Right ventricle myocardium inferior (tissue), 1 donor: ENCODE measurements at regions of chr2 and their contacts with region 1.

Region 1: DNA sequence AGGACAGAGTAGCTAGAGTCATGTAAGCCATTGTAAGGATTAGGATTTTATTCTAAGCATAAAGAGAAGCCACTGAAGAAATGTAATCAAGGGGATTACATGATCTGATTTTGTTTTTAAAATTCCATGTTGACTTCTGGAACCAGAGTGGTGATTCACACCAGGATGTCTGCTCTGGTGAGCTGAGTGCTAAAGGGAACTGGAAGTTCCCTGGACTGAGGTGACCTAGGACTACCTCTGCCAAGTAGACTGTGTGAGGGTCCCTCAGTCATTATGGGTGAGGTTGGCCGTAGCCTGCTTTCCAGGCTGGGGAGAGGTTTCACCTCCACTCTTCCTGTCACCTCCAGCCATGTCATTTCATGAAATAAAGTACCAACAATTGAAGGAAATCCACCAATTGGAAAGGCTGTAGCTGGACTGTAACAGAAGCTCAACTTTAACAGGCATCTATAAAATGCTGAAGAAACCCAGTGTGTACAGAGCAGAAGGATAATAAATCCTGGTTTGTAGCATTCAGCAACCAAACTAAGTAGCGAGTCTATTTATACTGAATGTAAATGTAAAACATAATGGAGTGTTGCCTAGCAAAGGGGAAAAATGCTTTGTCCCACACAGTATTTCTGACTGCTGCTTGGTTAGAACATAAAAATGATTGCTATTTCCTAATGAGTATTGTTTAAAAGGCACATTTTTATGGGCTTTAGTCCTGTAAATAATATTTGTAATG is 507.4 kb upstream of the PKDCC start:
- DNase-seq: no peak
- ATAC-seq: no peak

Region 2: GRCh38 chr2:41434991-41435390 is 105.4 kb before region 1 on chr2:
- intact Hi-C with region 1: loop called (anchors 5 kb)
- DNase-seq: no peak
- ATAC-seq: no peak

Region 3: GRCh38 chr2:41698678-41699422 is 158.4 kb after region 1 on chr2:
- intact Hi-C with region 1: no loop called
- DNase-seq: peak; percentile 74
- ATAC-seq: peak; percentile 72